Vagina (tissue), 2 donors: ENCODE measurements at regions of chr16 and their contacts with region 1.

Region 1: DNA sequence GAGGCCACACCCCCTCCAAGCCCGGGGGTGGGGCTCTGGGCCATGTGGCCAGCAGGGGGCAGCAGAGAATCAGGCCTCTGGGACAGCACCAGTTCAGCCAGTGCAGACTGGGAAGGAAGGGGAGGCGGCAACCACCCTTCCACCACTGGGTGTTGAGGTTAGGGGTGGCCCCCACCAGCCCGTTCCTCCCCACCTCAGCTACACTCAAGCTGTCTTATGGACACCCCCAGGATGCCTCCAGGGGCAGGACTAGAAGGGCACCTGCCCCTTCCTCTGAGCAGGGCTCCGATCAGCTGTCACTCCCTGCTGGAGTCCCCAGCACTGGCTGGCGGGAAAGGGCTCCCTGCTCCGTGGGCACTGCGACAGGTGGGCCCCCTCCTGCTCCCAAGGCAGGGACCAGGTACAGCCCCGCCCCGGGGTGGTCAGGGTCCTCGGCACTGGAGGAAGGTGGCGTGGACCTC is 21.8 kb downstream of the KATNB1 start:
- DNase-seq: no peak
- H3K4me3 ChIP-seq: no peak overlapping the region
- H3K27ac ChIP-seq: no peak overlapping the region
- H3K4me1 ChIP-seq: peaks cover 8% of the 10 kb centered on the region
- H3K27me3 ChIP-seq: no peaks in the 10 kb centered on the region
- CTCF ChIP-seq: peak; percentile 93 to 97 (median 94)
- POLR2A ChIP-seq: no peak

Region 2: DNA sequence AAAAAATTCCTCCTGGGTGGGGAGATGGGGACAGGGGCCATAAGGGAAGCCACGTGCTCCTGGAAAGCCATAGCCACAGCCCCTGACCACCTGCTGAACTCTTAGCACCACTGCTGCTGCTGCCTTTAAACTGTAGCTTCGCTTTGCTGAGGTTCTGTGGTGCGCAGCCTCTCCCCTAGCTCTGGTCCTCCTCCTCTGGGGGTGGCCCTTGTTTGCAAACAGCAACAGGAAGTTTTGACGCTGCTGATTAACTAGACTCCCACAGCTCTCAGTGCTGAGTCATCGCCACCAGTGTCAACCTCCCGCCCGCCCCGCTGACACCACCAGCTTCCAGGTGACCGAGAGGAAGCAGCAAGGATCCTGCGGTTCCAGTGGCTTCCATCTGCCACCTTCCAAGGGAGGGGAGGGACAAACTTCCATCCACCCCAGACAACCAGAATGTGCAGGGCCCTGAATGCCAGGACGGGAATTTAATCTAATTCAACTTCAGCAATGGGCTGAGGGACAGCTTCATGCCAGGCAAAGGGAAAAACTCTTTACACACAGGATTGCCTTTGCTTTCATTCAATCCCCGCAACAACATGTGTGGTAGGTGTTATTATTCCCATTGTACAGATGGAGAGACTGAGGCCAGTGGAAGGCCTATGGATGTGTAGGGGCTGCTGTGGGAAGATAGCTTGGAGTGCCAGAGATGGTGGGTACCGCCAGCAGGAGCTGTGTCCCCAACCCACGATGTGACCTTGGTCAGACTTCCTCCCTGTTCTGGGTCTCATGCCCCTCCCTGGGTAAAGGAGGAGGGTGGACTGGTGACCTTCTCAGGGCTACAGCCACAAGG is 53.1 kb after region 1 on chr16:
- intact Hi-C with region 1: no loop called
- DNase-seq: no peak
- H3K4me3 ChIP-seq: no peak overlapping the region
- H3K27ac ChIP-seq: peak overlapping the region; percentile 68
- H3K4me1 ChIP-seq: peaks cover 35% of the 10 kb centered on the region
- H3K27me3 ChIP-seq: no peaks in the 10 kb centered on the region
- CTCF ChIP-seq: no peak
- POLR2A ChIP-seq: peak in 1 of 2 donors; percentile 25

Region 3: GRCh38 chr16:57863434-57864160 is 106.2 kb after region 1 on chr16:
- intact Hi-C with region 1: loop called (anchors 5 kb)
- DNase-seq: no peak
- H3K4me3 ChIP-seq: no peak overlapping the region
- H3K27ac ChIP-seq: no peak overlapping the region
- H3K4me1 ChIP-seq: peaks cover 5% of the 10 kb centered on the region
- H3K27me3 ChIP-seq: no peaks in the 10 kb centered on the region
- CTCF ChIP-seq: peak in 2 of 3 experiments; percentile 30 to 41
- POLR2A ChIP-seq: no peak

Region 4: DNA sequence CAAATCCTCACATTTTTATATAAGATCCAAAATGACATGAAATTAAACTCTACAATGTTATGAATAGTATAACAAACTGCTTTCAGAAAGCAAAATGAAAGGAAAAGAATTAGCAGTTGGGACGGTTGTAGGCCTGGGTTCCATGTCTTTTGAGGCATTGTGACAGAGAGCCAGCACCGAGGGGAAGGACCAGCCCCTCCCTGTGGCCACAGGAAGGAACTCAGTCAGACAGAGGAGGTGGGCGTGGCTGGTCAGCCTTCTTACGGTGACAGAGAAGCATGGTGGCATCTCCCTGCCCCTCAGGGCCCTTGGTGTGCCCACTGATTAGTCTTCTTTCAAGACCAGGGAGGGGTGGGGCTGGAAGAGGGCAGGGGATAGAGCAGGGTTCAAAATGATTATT is 237.4 kb after region 1 on chr16:
- intact Hi-C with region 1: loop called (anchors 10 kb)
- DNase-seq: no peak
- H3K4me3 ChIP-seq: no peak overlapping the region
- H3K27ac ChIP-seq: no peak overlapping the region
- H3K4me1 ChIP-seq: peaks cover 33% of the 10 kb centered on the region
- H3K27me3 ChIP-seq: no peaks in the 10 kb centered on the region
- CTCF ChIP-seq: peak in 1 of 3 experiments; percentile 11
- POLR2A ChIP-seq: no peak

Region 5: GRCh38 chr16:58070585-58070984 is 313.2 kb after region 1 on chr16:
- intact Hi-C with region 1: no loop called
- DNase-seq: no peak
- H3K4me3 ChIP-seq: no peak overlapping the region
- H3K27ac ChIP-seq: no peak overlapping the region
- H3K4me1 ChIP-seq: no peaks in the 10 kb centered on the region
- H3K27me3 ChIP-seq: no peaks in the 10 kb centered on the region
- CTCF ChIP-seq: no peak
- POLR2A ChIP-seq: no peak